Activated B cell treated with CpG ODN at 0.5 μM for 24 hours (primary cell): ENCODE measurements at regions of chr5 and their contacts with region 1.

Region 1: GRCh38 chr5:111063700-111064322 is 7.7 kb upstream of the TSLP start:
- DNase-seq: no peak
- ATAC-seq: no peak
- H3K4me3 Mint-ChIP-seq: no peak overlapping the region
- H3K27ac Mint-ChIP-seq: no peak overlapping the region
- H3K4me1 Mint-ChIP-seq: no peaks in the 10 kb centered on the region
- H3K27me3 Mint-ChIP-seq: peaks cover 22% of the 10 kb centered on the region
- CTCF ChIP-seq: no peak

Region 2: GRCh38 chr5:110757118-110757729 is 306.6 kb before region 1 on chr5:
- CTCF ChIA-PET with region 1: no interaction called
- POLR2A ChIA-PET with region 1: no interaction called
- intact Hi-C with region 1: loop called (anchors 1 kb)
- DNase-seq: no peak
- ATAC-seq: no peak
- H3K4me3 Mint-ChIP-seq: no peak overlapping the region
- H3K27ac Mint-ChIP-seq: no peak overlapping the region
- H3K4me1 Mint-ChIP-seq: peaks cover 9% of the 10 kb centered on the region
- H3K27me3 Mint-ChIP-seq: no peaks in the 10 kb centered on the region
- CTCF ChIP-seq: peak; percentile 65

Region 3: DNA sequence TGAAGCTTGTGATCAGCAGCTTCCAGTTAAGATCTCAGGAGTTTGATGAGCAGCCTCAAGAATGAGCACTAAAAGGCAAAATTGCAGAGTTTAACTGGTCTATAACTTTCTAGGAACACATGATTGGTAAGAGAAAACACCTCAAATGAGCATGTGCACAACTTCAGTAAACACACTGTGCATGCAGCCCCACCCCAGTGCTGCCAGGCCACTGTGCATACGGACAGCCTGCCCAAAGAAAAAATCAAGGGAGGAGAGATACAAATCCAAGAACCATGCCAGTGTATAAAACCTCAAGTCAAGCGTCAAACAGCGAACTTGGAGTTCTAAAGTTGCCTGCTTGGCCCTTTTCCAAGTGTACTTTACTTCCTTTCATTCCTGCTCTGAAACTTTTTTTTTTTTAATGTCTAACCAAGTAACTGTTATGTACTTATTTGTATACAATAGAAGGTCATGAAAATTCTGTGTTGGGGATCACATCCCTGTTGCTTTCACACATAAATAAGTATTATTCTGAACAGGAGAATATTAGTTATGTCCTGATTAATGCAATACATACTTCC is 117.9 kb before region 1 on chr5:
- CTCF ChIA-PET with region 1: no interaction called
- POLR2A ChIA-PET with region 1: no interaction called
- intact Hi-C with region 1: no loop called
- DNase-seq: no peak
- ATAC-seq: no peak
- H3K4me3 Mint-ChIP-seq: no peak overlapping the region
- H3K27ac Mint-ChIP-seq: no peak overlapping the region
- H3K4me1 Mint-ChIP-seq: no peaks in the 10 kb centered on the region
- H3K27me3 Mint-ChIP-seq: no peaks in the 10 kb centered on the region
- CTCF ChIP-seq: no peak

Region 4: GRCh38 chr5:111016801-111017200 is 47.0 kb before region 1 on chr5:
- CTCF ChIA-PET with region 1: no interaction called
- POLR2A ChIA-PET with region 1: no interaction called
- intact Hi-C with region 1: no loop called
- DNase-seq: no peak
- ATAC-seq: no peak
- H3K4me3 Mint-ChIP-seq: no peak overlapping the region
- H3K27ac Mint-ChIP-seq: no peak overlapping the region
- H3K4me1 Mint-ChIP-seq: no peaks in the 10 kb centered on the region
- H3K27me3 Mint-ChIP-seq: no peaks in the 10 kb centered on the region
- CTCF ChIP-seq: no peak